Left colon (tissue), 2 donors: ENCODE measurements at regions of chr3 and their contacts with region 1.

Region 1: GRCh38 chr3:32947789-32948238 is 3.6 kb upstream of the CCR4 start:
- DNase-seq: peak; percentile 66 to 95
- ATAC-seq: peak; percentile 97

Region 2: GRCh38 chr3:33074217-33075067 is 126.6 kb after region 1 on chr3:
- intact Hi-C with region 1: loop called in 1 of 2 experiments (anchors 10 kb)
- DNase-seq: peak in 1 of 2 donors; percentile 72
- ATAC-seq: peak; percentile 76